Activated CD4-positive, alpha-beta T cell treated with anti-CD3 and anti-CD28 coated beads for 36 hours (primary cell): ENCODE measurements at regions of chr2 and their contacts with region 1.

Region 1: GRCh38 chr2:64914735-64915509 is 74.3 kb upstream of the SLC1A4 start:
- DNase-seq: no peak
- ATAC-seq: no peak
- H3K4me3 Mint-ChIP-seq: no peak overlapping the region
- H3K27ac Mint-ChIP-seq: no peak overlapping the region
- H3K4me1 Mint-ChIP-seq: peaks cover 19% of the 10 kb centered on the region
- H3K27me3 Mint-ChIP-seq: no peaks in the 10 kb centered on the region

Region 2: DNA sequence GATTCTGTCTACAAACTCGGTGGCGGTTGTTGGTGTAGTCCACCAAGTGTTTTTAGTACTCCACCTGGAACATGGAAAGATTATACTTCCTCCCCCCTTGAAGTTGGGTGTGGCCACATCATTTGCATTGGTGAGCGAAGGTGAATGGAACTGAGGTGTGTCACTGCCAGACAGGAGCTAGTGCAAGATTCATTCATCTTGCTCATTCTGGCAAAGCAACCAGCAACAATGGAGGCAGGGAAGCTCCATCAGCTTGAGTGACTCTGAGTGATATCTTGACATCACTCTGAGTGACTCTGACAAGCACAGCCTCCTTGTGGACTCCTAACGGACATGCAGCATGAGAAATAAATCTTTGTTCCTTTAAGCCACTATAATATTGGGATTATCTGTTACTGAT is 19.6 kb after region 1 on chr2:
- CTCF ChIA-PET with region 1: no interaction called
- POLR2A ChIA-PET with region 1: no interaction called
- intact Hi-C with region 1: no loop called
- DNase-seq: no peak
- ATAC-seq: no peak
- H3K4me3 Mint-ChIP-seq: no peak overlapping the region
- H3K27ac Mint-ChIP-seq: no peak overlapping the region
- H3K4me1 Mint-ChIP-seq: peaks cover 3% of the 10 kb centered on the region
- H3K27me3 Mint-ChIP-seq: peaks cover 4% of the 10 kb centered on the region

Region 3: GRCh38 chr2:64945973-64946768 is 31.2 kb after region 1 on chr2:
- CTCF ChIA-PET with region 1: interaction called, 15 read pairs
- POLR2A ChIA-PET with region 1: interaction called, 5 read pairs
- intact Hi-C with region 1: no loop called
- DNase-seq: peak; percentile 78
- ATAC-seq: peak; percentile 98
- H3K4me3 Mint-ChIP-seq: peak overlapping the region; percentile 50
- H3K27ac Mint-ChIP-seq: peak overlapping the region; percentile 89
- H3K4me1 Mint-ChIP-seq: peaks cover 30% of the 10 kb centered on the region
- H3K27me3 Mint-ChIP-seq: no peaks in the 10 kb centered on the region

Region 4: DNA sequence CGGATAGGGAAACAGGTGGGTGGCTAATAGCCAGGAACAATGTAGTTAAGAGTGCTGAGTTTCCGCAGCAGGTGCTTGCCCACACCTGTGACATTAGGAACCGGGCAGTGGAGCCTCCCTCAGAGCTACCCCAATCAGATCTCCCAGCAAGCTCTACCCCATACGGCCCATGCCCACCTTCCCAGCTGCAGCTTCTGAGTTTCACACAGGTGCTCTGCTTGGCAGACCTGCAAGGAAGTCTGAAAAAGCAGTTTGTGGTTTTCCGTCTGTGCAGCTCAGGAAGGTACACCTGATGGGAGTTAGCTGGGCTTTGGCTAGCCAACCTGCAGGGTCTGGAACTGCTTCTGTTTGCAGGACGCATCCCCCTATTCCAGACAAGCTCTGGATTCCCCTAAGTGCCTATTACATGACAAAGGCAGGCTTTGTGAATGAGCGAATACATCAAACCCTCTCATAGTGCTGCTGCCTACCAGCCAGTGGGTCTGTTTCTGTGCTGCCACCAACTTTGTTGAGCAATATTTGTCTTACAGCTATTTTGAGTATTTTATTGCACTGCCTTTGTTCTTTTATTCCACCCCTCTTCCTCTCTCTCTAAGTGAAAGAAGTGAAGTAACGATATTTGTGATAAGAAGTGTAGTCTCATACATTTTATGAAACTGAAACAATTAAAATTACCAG is 116.6 kb after region 1 on chr2:
- CTCF ChIA-PET with region 1: interaction called, 20 read pairs
- POLR2A ChIA-PET with region 1: no interaction called
- intact Hi-C with region 1: loop called (anchors 1 to 2 kb)
- DNase-seq: no peak
- ATAC-seq: peak; percentile 59
- H3K4me3 Mint-ChIP-seq: no peak overlapping the region
- H3K27ac Mint-ChIP-seq: peak overlapping the region; percentile 56
- H3K4me1 Mint-ChIP-seq: peaks cover 23% of the 10 kb centered on the region
- H3K27me3 Mint-ChIP-seq: no peaks in the 10 kb centered on the region

Region 5: DNA sequence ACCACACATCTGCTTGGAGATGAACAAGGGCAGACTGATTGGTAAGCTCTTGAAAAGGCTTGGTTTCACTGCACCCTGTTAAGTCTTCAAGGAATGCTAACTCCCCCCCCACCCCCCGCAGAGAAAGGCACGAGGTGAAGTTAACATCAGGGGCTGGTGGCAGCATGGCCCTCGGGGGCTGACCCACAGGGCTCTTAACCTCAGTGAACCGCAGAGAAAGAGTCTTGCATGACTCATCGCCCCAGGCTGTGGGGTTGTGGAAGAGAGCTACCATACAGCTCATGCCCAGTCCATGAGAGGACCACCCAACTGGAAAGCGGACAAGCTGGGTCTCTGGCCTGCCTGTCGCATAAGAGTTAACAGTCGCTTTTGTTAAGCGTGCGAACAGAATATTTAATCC is 130.7 kb after region 1 on chr2:
- CTCF ChIA-PET with region 1: interaction called, 42 read pairs
- POLR2A ChIA-PET with region 1: no interaction called
- intact Hi-C with region 1: loop called (anchors 1 kb)
- DNase-seq: no peak
- ATAC-seq: no peak
- H3K4me3 Mint-ChIP-seq: no peak overlapping the region
- H3K27ac Mint-ChIP-seq: no peak overlapping the region
- H3K4me1 Mint-ChIP-seq: peaks cover 1% of the 10 kb centered on the region
- H3K27me3 Mint-ChIP-seq: no peaks in the 10 kb centered on the region

Region 6: DNA sequence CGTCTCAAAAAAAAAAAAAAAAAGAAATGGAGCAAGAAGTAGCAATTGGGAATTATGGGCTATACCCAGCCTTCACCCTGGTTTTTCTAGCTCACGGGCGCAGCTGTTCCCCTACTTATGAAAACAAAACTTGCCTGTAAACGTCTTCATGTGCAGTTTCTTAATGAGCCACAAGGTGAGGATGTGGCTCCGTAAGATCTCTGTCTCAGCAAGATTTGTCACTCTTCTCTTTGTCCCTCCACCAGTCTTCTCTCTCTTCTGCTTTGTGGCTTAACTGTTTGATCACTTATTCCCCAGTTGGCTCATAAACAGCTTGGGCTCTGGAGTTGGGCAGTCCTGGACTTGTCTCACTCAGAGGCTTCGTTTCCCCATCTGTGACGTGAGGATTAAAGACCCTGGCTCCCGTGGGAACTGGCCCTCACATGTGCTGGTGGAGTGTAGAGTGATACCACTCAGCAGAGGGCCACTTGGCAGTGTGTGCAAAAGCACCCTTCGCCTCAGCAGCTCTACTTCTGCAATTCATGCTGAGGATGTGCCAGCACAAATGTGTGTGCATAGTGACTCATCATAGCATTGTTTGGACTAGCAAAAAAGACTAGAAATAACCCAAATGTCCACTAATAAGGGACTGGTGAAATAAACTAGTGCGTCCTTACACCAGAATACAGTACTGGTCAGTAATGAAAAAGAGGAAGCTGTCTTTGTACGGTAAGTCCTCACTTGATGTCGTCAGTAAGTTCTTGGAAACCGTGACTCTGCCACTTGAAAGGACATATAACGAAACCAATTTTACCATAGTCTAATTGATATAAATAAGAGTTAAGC is 150.0 kb after region 1 on chr2:
- CTCF ChIA-PET with region 1: interaction called, 12 read pairs
- POLR2A ChIA-PET with region 1: no interaction called
- intact Hi-C with region 1: no loop called
- DNase-seq: peak; percentile 66
- ATAC-seq: peak; percentile 84
- H3K4me3 Mint-ChIP-seq: peak overlapping the region; percentile 35
- H3K27ac Mint-ChIP-seq: peak overlapping the region; percentile 76
- H3K4me1 Mint-ChIP-seq: peaks cover 44% of the 10 kb centered on the region
- H3K27me3 Mint-ChIP-seq: no peaks in the 10 kb centered on the region

Region 7: DNA sequence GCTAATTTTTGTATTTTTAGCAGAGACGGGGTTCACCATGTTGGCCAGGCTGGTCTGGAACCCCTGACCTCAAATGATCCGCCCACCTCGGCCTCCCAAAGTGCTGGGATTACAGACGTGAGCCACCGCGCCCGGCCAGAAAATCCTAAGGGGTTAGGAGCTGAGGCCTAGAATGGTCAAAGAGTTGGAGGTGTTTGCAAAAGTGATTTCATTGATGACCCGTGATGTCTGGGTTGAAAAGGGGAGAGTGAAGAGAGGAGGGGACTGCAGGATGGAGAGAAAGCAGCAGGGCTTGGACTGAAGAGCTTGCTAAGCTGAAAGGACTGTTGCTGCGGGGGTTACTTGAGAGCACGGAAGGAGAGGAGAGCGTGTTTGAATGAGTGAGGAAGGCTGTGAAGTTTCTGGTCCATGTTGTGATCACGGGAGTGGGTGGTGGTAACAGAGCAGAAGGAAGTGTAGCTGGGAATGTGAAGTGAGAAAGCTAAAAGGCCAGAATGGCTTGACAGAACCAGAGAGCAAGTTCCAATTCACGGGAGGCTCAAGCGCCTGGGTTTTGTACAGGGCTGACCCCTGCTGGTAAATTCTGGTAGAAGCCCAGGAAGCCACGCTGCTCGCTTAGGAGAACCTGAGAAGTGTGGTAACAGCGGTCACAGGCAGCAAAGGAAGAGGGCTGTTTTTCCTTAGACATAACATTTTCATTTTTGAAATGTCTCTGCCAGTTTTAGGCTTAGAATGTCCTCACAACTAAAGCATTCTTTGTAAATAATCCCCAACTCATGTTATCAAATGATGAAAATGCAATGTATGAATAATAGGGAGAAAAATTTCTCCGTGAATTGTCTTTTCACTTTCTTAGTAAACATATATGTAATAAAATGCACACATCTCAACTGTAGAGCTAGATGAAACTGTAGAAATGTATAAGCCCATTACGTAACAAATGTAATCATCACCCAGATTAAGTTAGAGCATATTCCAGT is 272.2 kb after region 1 on chr2:
- CTCF ChIA-PET with region 1: interaction called, 9 read pairs
- POLR2A ChIA-PET with region 1: no interaction called
- intact Hi-C with region 1: loop called in 1 of 2 experiments (anchors 5 kb)
- DNase-seq: peak; percentile 77
- ATAC-seq: peak; percentile 87
- H3K4me3 Mint-ChIP-seq: no peak overlapping the region
- H3K27ac Mint-ChIP-seq: no peak overlapping the region
- H3K4me1 Mint-ChIP-seq: peaks cover 4% of the 10 kb centered on the region
- H3K27me3 Mint-ChIP-seq: peaks cover 9% of the 10 kb centered on the region

Region 8: DNA sequence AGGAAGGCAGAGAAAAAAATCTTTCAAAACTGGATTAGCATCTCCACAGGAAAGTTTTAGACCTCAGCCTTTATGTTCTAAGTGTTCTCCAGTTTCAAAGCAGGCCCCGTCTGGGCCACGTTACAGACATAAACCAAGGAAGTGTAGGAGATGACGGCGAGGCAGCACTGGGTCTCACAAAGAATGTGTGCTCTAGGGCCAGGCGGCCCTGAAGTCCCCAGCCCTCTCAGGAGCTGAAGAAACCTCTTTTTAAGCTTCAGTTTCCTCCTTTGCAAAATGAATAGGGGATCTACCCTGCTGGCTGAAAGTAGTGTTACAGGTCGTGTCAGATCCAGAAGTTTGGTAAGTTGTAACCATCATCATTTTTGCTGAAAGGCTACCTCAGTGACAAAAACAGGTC is 435.8 kb after region 1 on chr2:
- CTCF ChIA-PET with region 1: no interaction called
- POLR2A ChIA-PET with region 1: no interaction called
- intact Hi-C with region 1: no loop called
- DNase-seq: peak; percentile 18
- ATAC-seq: peak; percentile 58
- H3K4me3 Mint-ChIP-seq: no peak overlapping the region
- H3K27ac Mint-ChIP-seq: no peak overlapping the region
- H3K4me1 Mint-ChIP-seq: peaks cover 7% of the 10 kb centered on the region
- H3K27me3 Mint-ChIP-seq: peaks cover 2% of the 10 kb centered on the region

Region 9: DNA sequence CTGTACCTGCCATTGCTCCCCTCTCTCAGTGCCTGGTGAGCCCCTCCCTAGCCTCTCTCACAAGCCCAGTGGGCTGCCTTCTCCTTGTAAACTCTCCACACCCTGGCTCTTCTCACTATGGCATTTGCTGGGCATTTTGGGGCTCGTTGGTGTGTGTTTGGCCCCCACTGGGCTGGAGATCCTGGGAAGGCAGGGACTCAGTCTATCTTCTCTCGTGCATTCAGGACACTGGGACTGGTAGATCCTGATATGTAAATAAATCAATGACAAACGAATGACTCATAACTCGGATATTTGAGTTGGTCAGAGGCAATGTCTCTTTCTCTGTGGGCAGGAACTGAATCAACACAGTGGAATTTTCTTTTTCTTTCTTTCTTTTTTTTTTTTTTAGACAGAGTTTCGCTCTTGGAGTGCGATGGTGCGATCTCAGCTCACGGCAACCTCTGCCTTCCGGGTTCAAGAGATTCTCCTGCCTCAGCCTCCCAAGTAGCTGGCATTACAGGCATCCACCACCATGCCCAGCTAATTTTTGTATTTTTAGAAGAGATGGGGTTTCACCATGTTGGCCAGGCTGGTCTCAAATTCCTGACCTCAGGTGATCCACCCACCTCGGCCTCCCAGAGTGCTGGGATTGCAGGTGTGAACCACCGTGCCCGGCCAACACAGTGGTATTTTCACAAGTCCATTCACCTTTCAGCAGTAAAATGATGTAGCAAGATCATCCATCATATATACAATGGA is 662.1 kb after region 1 on chr2:
- CTCF ChIA-PET with region 1: interaction called, 3 read pairs
- POLR2A ChIA-PET with region 1: no interaction called
- intact Hi-C with region 1: loop called (anchors 1 kb)
- DNase-seq: no peak
- ATAC-seq: peak; percentile 53
- H3K4me3 Mint-ChIP-seq: no peak overlapping the region
- H3K27ac Mint-ChIP-seq: no peak overlapping the region
- H3K4me1 Mint-ChIP-seq: peaks cover 3% of the 10 kb centered on the region
- H3K27me3 Mint-ChIP-seq: peaks cover 9% of the 10 kb centered on the region